Posterior vena cava (tissue), 2 donors: ENCODE measurements at regions of chr9 and their contacts with region 1.

Region 1: GRCh38 chr9:69313175-69313574 is 11.8 kb upstream of the ENTREP1 start:
- DNase-seq: no peak

Region 2: GRCh38 chr9:68775003-68775730 is 538.0 kb before region 1 on chr9:
- intact Hi-C with region 1: no loop called
- DNase-seq: no peak

Region 3: DNA sequence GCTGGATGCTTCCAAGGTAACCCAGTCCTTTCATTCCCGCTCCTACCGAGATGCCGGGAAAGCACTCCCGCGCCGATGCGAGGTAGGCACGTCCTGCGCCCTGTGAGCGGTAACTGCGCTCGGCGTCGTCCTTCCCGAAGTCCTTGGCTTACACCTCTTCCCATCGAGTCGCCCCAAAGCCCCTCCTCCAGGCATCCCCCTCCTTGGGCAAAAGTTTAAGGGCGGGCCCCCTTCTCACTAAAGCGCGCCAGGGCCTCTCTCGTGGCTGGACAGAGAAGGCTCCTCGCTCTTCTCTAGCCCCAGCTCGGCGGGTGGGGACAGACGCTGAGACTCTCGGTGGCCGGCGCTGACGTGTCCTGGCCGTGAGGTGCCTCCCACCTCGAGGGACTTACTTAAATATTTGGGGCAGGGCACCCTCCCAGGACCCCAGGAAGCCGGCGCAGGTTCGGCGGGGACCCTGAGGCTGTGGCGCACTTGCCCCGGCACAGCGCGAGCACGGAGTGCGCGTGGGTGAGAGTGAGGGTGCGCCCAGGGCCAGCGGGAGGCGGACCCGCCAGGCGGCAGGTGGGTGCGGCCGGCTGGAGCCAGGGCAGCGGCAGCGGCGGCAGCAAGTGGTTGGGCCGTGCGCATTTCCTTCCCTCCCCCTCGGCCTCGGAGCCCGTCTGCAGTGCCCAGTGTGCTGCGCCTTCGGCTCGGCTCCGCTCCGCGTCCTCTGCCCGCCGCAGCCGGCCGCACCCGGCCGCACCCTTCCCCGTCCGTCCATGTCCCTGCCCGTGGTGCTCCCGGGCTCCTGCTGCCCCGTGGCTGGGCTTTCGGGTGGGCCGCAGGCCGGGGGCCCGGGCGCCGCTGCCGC is 11.6 kb after region 1 on chr9 and contains the start of gene ENTREP1:
- intact Hi-C with region 1: loop called in 1 of 2 experiments (anchors 1 kb)
- DNase-seq: peak; percentile 85
- total RNA-seq, gene ENTREP1: 3.3 to 6.5 TPM

Region 4: DNA sequence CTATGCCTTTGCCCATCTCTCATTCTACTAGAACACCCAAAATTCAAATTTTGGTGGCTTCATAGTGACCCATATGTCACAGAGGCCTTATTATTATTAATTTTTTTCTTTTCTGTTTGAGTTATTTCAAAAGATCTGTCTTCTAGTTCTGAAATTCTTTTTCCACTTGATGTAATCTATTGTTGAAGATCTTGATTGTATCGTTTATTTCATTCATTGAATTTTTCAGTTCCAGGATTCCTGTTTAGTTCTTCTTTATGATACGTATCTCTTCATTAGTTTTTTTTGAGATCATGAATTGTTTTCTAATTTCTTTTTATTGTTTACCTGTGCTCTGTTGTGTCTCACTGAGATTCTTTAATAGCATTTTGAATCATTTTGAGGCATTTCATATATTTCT is 383.6 kb after region 1 on chr9:
- intact Hi-C with region 1: no loop called
- DNase-seq: no peak